ENCODE measurements at regions of chr13 and their contacts with region 1.

Region 1: GRCh38 chr13:85693889-85694511 is 105.2 kb downstream of the SLITRK6 start:
- DNase-seq: no peak
- ATAC-seq: no peak
- H3K4me3 ChIP-seq: no peak overlapping the region
- H3K27ac ChIP-seq: no peak overlapping the region
- H3K4me1 ChIP-seq: no peaks in the 10 kb centered on the region
- H3K27me3 ChIP-seq: no peaks in the 10 kb centered on the region
- CTCF ChIP-seq: no peak
- EP300 ChIP-seq: no peak
- POLR2A ChIP-seq: no peak
- RAD21 ChIP-seq: no peak

Region 2: GRCh38 chr13:84760956-84761355 is 933.0 kb before region 1 on chr13:
- CTCF ChIA-PET with region 1: no interaction called
- POLR2A ChIA-PET with region 1: no interaction called
- in situ Hi-C with region 1: no loop called
- intact Hi-C with region 1: no loop called
- DNase-seq: no peak
- ATAC-seq: no peak
- H3K4me3 ChIP-seq: no peak overlapping the region
- H3K27ac ChIP-seq: no peak overlapping the region
- H3K4me1 ChIP-seq: no peaks in the 10 kb centered on the region
- H3K27me3 ChIP-seq: no peaks in the 10 kb centered on the region
- CTCF ChIP-seq: no peak
- EP300 ChIP-seq: no peak
- POLR2A ChIP-seq: no peak
- RAD21 ChIP-seq: no peak

Region 3: GRCh38 chr13:85632526-85633195 is 61.3 kb before region 1 on chr13:
- CTCF ChIA-PET with region 1: no interaction called
- POLR2A ChIA-PET with region 1: no interaction called
- in situ Hi-C with region 1: no loop called
- intact Hi-C with region 1: no loop called
- DNase-seq: no peak
- ATAC-seq: no peak
- H3K4me3 ChIP-seq: no peak overlapping the region
- H3K27ac ChIP-seq: no peak overlapping the region
- H3K4me1 ChIP-seq: no peaks in the 10 kb centered on the region
- H3K27me3 ChIP-seq: no peaks in the 10 kb centered on the region
- CTCF ChIP-seq: no peak
- EP300 ChIP-seq: no peak
- POLR2A ChIP-seq: no peak
- RAD21 ChIP-seq: no peak

Region 4: GRCh38 chr13:85717921-85718320 is 23.9 kb after region 1 on chr13:
- CTCF ChIA-PET with region 1: no interaction called
- POLR2A ChIA-PET with region 1: no interaction called
- in situ Hi-C with region 1: no loop called
- intact Hi-C with region 1: loop called (anchors 1 kb)
- DNase-seq: no peak
- ATAC-seq: no peak
- H3K4me3 ChIP-seq: no peak overlapping the region
- H3K27ac ChIP-seq: no peak overlapping the region
- H3K4me1 ChIP-seq: no peaks in the 10 kb centered on the region
- H3K27me3 ChIP-seq: no peaks in the 10 kb centered on the region
- CTCF ChIP-seq: no peak
- EP300 ChIP-seq: no peak
- POLR2A ChIP-seq: no peak
- RAD21 ChIP-seq: no peak

Measured in HepG2 (cell line).